ENCODE measurements at regions of chr1 and their contacts with region 1.

Region 1: GRCh38 chr1:20992322-20993056 is 184.2 kb downstream of the EIF4G3 start:
- DNase-seq: no peak
- H3K4me3 Mint-ChIP-seq: peak overlapping the region; percentile 55
- H3K27ac Mint-ChIP-seq: peak overlapping the region; percentile 92
- H3K4me1 Mint-ChIP-seq: peaks cover 45% of the 10 kb centered on the region
- H3K27me3 Mint-ChIP-seq: no peaks in the 10 kb centered on the region

Region 2: GRCh38 chr1:20932437-20932977 is 60.0 kb before region 1 on chr1:
- intact Hi-C with region 1: loop called (anchors 1 kb)
- DNase-seq: no peak
- H3K4me3 Mint-ChIP-seq: peak overlapping the region; percentile 56
- H3K27ac Mint-ChIP-seq: peak overlapping the region; percentile 84
- H3K4me1 Mint-ChIP-seq: peaks cover 35% of the 10 kb centered on the region
- H3K27me3 Mint-ChIP-seq: no peaks in the 10 kb centered on the region

Region 3: DNA sequence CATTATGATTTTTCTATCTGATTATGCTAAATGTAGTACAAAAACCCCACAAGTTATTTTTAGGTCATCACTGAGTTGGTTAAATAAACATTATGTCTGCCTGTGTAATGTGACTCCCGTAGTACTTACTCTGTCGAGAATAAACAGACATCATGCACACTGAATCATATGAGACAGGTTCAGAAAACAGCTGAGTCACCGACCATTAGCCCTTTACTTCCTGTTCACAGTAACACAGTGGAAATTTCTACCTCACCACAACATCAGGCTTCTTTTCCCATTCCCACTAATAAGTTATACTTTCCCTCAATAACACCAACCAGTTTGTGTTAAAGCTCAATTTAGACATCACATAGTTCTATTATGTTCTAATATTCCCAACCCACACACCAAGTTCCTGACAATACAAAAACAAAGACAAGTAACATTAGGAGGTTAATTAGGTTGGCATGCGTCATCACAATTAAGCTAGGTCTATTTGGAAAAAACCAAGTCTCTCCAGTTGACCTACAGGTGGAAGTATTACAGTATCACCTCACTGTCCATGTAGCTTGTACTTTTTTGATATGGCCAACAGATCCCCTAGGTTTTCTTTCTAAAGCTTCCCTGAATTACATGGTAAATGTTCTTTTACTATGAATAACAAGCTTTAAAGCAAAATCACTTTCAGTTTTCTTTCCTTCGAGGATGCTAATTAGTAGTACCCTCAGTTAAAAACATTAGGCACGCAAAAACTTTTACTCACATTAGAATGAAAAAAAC is 30.0 kb after region 1 on chr1:
- intact Hi-C with region 1: loop called (anchors 1 kb)
- DNase-seq: no peak
- H3K4me3 Mint-ChIP-seq: peak overlapping the region; percentile 48
- H3K27ac Mint-ChIP-seq: peak overlapping the region; percentile 86
- H3K4me1 Mint-ChIP-seq: peaks cover 15% of the 10 kb centered on the region
- H3K27me3 Mint-ChIP-seq: no peaks in the 10 kb centered on the region

Region 4: GRCh38 chr1:21058035-21058793 is 65.7 kb after region 1 on chr1:
- intact Hi-C with region 1: no loop called
- DNase-seq: no peak
- H3K4me3 Mint-ChIP-seq: no peak overlapping the region
- H3K27ac Mint-ChIP-seq: no peak overlapping the region
- H3K4me1 Mint-ChIP-seq: peaks cover 3% of the 10 kb centered on the region
- H3K27me3 Mint-ChIP-seq: no peaks in the 10 kb centered on the region

Region 5: DNA sequence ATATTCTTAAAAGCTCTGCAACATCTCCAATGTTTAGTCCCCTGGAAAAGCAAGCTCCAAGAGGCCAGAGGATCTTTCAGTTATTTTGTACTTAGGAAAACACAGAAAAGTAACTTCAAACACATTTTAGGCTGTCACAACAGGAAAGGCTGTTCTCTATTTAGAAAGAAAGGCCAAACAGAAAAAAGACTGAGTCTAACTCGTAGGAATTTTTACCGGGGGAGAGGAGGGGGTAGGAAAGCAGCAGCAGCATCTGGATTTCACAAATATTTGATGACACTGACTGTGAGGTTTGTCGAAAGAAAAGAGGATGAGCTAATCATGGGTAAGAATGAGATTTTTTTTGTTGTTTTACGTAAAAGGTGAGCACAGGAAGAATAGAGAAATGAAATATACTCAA is 77.1 kb after region 1 on chr1:
- intact Hi-C with region 1: loop called (anchors 5 kb)
- DNase-seq: no peak
- H3K4me3 Mint-ChIP-seq: no peak overlapping the region
- H3K27ac Mint-ChIP-seq: no peak overlapping the region
- H3K4me1 Mint-ChIP-seq: peaks cover 11% of the 10 kb centered on the region
- H3K27me3 Mint-ChIP-seq: no peaks in the 10 kb centered on the region

Region 6: GRCh38 chr1:21176586-21177555 is 184.4 kb after region 1 on chr1 and contains the start of gene EIF4G3:
- intact Hi-C with region 1: loop called (anchors 5 kb)
- DNase-seq: peak; percentile 99
- H3K4me3 Mint-ChIP-seq: peak within 1 kb of the TSS; percentile 86
- H3K27ac Mint-ChIP-seq: peak within 1 kb of the TSS; percentile 86
- H3K4me1 Mint-ChIP-seq: peaks cover 18% of the 10 kb centered on the region
- H3K27me3 Mint-ChIP-seq: peaks cover 4% of the 10 kb centered on the region
- total RNA-seq, gene EIF4G3: 64.2 and 66.0 TPM in 2 replicates